CD8-positive, alpha-beta T cell (primary cell): ENCODE measurements at regions of chr3 and their contacts with region 1.

Region 1: GRCh38 chr3:124730129-124730940 is at the start of gene UMPS:
- DNase-seq: peak; percentile 82 to 95 (median 93)
- ATAC-seq: peak; percentile 91
- H3K4me3 ChIP-seq: peak within 1 kb of the TSS; percentile 96 to 97
- H3K4me3 Mint-ChIP-seq: peak within 1 kb of the TSS; percentile 99
- H3K27ac ChIP-seq: peak within 1 kb of the TSS; percentile 82 to 93
- H3K27ac Mint-ChIP-seq: peak within 1 kb of the TSS; percentile 99
- H3K4me1 ChIP-seq: peaks cover 29% of the 10 kb centered on the region
- H3K4me1 Mint-ChIP-seq: peaks cover 39% of the 10 kb centered on the region
- H3K27me3 ChIP-seq: peaks cover 0 to 4% of the 10 kb centered on the region in 2 experiments
- H3K27me3 Mint-ChIP-seq: peaks cover 10% of the 10 kb centered on the region
- CTCF ChIP-seq: no peak
- total RNA-seq, gene UMPS: 16.7 to 19.8 TPM

Region 2: DNA sequence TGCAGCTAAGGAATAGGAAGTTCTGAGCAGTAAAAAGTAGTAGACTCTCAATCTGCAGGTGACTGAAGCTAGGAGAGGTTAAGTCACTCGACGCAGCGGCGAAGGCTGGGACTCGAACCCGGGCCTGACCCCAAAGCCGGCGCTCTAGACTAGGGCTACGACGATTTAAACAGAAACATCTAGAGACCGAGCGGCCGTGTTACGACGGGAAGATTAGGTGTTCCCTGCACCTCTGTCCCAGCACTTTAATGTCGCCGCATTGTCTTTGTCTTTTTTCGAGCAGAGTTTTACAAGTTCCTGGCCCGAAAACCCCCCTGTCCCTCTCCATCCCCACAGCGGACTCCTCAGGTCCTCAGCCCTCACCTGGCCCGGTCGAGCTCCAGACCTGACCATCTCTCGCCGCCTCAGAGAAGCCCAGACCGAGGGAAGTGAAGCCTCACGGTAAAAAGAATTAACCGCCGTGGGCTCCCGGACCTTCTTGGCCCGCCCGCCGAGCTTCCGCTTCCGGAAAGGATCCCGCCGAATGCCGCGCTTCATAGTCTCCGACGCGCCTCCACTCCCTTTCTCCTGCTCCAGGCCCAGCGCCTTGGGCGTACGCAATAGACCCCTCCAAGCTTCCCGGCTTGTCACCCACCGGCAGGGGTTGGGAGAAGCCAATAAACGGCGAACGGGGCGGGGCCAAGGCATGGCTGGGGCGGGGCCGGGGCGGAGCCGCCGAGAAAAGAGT is 769.4 kb before region 1 on chr3 and contains the start of gene CCDC14:
- CTCF ChIA-PET with region 1: no interaction called
- POLR2A ChIA-PET with region 1: no interaction called
- intact Hi-C with region 1: loop called in 1 of 2 experiments (anchors 5 kb)
- DNase-seq: peak; percentile 37 to 84 (median 73)
- ATAC-seq: peak; percentile 88
- H3K4me3 ChIP-seq: peak within 1 kb of the TSS; percentile 63
- H3K4me3 Mint-ChIP-seq: peak within 1 kb of the TSS; percentile 96
- H3K27ac ChIP-seq: peak within 1 kb of the TSS; percentile 52 to 59
- H3K27ac Mint-ChIP-seq: peak within 1 kb of the TSS; percentile 93
- H3K4me1 ChIP-seq: peaks cover 16% of the 10 kb centered on the region
- H3K4me1 Mint-ChIP-seq: peaks cover 30% of the 10 kb centered on the region
- H3K27me3 ChIP-seq: no peaks in the 10 kb centered on the region
- H3K27me3 Mint-ChIP-seq: peaks cover 5% of the 10 kb centered on the region
- CTCF ChIP-seq: no peak
- total RNA-seq, gene CCDC14: 21.9 to 23.8 TPM

Region 3: GRCh38 chr3:125519678-125520589 is 789.6 kb after region 1 on chr3 and contains the start of gene SNX4:
- CTCF ChIA-PET with region 1: no interaction called
- POLR2A ChIA-PET with region 1: no interaction called
- intact Hi-C with region 1: loop called in 1 of 2 experiments (anchors 5 kb)
- DNase-seq: peak; percentile 73 to 91 (median 86)
- ATAC-seq: peak; percentile 96
- H3K4me3 ChIP-seq: peak within 1 kb of the TSS; percentile 66 to 77
- H3K4me3 Mint-ChIP-seq: peak within 1 kb of the TSS; percentile 97
- H3K27ac ChIP-seq: peak within 1 kb of the TSS; percentile 60 to 61
- H3K27ac Mint-ChIP-seq: peak within 1 kb of the TSS; percentile 95
- H3K4me1 ChIP-seq: peaks cover 12% of the 10 kb centered on the region
- H3K4me1 Mint-ChIP-seq: peaks cover 46% of the 10 kb centered on the region
- H3K27me3 ChIP-seq: no peaks in the 10 kb centered on the region
- H3K27me3 Mint-ChIP-seq: no peaks in the 10 kb centered on the region
- CTCF ChIP-seq: no peak
- total RNA-seq, gene SNX4: 26.4 to 29.7 TPM